A673 (cell line): ENCODE measurements at regions of chr7 and their contacts with region 1.

Region 1: DNA sequence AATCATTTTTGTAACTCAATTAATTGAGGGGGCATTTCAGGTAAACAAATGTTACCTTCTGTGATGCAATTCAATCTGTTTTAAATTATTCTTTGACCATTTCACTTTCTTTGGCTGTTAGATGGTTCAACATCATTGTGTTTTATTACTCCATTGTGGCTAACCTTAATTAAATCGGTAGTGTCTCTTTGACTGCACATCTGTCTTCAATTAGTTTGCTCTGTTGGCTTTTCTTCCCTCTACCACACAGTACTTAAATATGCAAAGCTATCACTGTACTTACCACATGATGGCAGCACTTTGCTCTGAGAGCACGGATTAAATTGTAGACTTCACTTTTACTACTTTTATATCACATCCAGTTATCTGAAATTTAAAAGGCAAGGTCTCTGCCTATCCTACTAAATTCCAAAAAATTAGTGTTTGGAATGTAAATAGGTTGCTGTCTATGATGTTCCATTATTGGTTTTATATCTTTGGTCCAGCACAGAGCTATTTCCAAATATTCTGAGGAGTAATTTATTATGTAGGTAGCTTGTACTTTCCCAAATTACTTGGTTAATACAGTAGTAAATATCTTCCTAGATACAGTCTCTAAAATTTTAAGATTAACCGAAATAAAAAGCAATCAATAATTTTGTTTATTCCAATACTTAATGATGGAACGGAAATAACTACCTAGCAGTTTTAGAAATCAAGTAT is 352.0 kb downstream of the PCLO start:
- DNase-seq: peak; percentile 92
- H3K4me3 ChIP-seq: no peak overlapping the region
- H3K27ac ChIP-seq: no peak overlapping the region
- H3K4me1 ChIP-seq: peaks cover 24% of the 10 kb centered on the region
- H3K27me3 ChIP-seq: no peaks in the 10 kb centered on the region
- CTCF ChIP-seq: peak; percentile 88

Region 2: DNA sequence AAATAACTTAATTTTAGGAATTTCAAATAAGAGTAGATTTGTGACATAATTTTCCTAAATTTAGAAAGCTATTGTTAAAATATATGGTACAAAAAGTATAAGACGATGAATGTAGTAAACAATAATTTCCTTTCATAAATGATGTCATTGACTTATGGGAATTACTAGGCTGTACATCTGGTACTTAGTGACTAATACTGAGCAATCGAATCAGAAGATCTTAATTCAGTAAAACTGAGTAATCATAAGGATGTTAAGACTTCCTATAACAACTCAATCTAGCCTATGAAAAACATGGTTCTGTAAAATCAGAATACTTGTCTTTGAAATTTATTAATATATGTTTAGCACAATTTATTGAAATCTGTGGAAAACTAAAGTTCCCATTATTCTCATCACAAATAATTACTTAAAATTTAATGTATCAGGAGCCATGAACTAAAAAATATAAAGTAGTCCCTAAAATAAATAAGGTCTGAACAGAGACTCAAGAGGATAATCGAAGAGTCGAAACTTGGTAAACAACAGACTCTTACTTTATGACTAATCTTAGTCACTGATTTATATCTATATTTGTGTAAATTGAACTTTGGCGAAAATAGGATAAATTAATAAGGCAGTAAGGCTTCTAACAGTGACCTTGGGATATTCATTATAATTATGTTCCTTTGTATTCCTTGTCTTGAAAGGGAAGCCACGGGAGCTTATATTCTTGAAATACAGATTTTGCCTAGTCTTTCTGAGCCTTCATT is 1183.0 kb before region 1 on chr7:
- CTCF ChIA-PET with region 1: no interaction called
- POLR2A ChIA-PET with region 1: no interaction called
- intact Hi-C with region 1: no loop called
- DNase-seq: peak; percentile 9
- H3K4me3 ChIP-seq: no peak overlapping the region
- H3K27ac ChIP-seq: no peak overlapping the region
- H3K4me1 ChIP-seq: peaks cover 8% of the 10 kb centered on the region
- H3K27me3 ChIP-seq: no peaks in the 10 kb centered on the region
- CTCF ChIP-seq: no peak

Region 3: GRCh38 chr7:82740246-82740848 is 70.4 kb before region 1 on chr7:
- CTCF ChIA-PET with region 1: no interaction called
- POLR2A ChIA-PET with region 1: no interaction called
- intact Hi-C with region 1: no loop called
- DNase-seq: peak; percentile 81
- H3K4me3 ChIP-seq: no peak overlapping the region
- H3K27ac ChIP-seq: no peak overlapping the region
- H3K4me1 ChIP-seq: no peaks in the 10 kb centered on the region
- H3K27me3 ChIP-seq: no peaks in the 10 kb centered on the region
- CTCF ChIP-seq: peak; percentile 85

Region 4: DNA sequence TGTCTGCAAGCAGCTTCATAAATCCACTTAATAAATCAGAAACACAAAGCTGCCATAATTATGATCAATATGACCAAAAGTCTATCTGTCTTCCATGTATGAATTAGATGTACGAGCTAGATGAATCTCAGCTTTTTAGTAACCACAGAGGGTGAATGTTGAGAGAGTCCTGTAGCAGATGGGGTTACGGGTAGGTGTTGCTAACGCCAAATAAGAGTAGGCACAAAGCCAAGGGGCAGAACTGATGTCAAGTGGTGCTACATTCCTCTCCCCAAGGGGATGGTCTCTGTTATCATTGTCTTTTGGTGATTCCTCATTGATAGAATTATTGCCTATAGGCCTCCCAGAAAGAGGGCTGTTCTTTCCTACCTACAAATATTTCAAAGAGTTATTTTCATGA is 94.2 kb after region 1 on chr7:
- CTCF ChIA-PET with region 1: no interaction called
- POLR2A ChIA-PET with region 1: no interaction called
- intact Hi-C with region 1: no loop called
- DNase-seq: no peak
- H3K4me3 ChIP-seq: no peak overlapping the region
- H3K27ac ChIP-seq: no peak overlapping the region
- H3K4me1 ChIP-seq: no peaks in the 10 kb centered on the region
- H3K27me3 ChIP-seq: no peaks in the 10 kb centered on the region
- CTCF ChIP-seq: no peak

Region 5: GRCh38 chr7:83162402-83163256 is 351.9 kb after region 1 on chr7 and contains the start of gene PCLO:
- CTCF ChIA-PET with region 1: no interaction called
- POLR2A ChIA-PET with region 1: no interaction called
- intact Hi-C with region 1: loop called (anchors 10 kb)
- DNase-seq: peak; percentile 75
- H3K4me3 ChIP-seq: peak within 1 kb of the TSS; percentile 57
- H3K27ac ChIP-seq: no peak within 1 kb of the TSS
- H3K4me1 ChIP-seq: peaks cover 7% of the 10 kb centered on the region
- H3K27me3 ChIP-seq: peaks cover 49% of the 10 kb centered on the region
- CTCF ChIP-seq: no peak
- total RNA-seq, gene PCLO: 1.2 and 2.1 TPM in 2 replicates

Region 6: DNA sequence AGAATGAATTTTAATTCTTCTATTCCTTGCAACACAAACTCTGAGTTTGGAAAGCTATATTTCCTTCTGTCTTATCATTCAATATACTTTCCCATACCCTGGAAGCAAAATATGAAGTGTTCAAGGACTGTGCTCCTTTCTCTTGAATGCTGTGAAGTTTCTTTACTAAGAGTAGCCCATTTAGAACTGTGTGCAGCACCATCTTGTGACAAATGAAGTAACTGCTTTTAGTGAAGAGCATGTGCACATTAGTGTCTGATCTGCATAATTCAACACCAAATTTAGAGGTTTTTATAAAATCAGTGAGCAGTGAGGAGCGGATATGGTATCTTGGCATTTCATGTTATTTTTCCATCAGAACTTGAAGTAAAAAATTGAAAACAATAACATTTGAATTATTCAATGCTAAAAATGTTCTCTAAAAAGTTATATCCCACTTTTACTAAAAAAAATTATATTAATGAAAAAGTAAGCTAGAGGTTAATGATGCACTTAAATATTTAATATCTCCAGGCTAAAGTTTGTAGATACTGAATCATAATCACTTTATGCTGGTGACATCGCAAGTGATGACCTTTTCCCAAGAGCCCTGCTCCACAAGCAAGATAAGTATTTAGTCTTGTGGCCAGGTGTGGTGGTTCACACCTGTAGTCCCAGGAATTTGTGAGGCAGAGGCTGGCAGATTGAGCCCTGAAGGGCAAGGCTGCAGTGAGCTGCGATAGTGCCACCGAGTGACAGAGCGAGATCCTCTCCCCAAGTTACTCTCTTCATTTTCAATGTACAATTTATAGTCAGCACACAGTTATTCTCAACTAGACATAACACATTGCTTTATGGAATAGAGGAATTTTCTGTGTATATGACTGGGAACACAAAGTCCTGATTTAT is 460.7 kb after region 1 on chr7:
- CTCF ChIA-PET with region 1: no interaction called
- POLR2A ChIA-PET with region 1: no interaction called
- intact Hi-C with region 1: loop called (anchors 1 kb)
- DNase-seq: peak; percentile 64
- H3K4me3 ChIP-seq: no peak overlapping the region
- H3K27ac ChIP-seq: no peak overlapping the region
- H3K4me1 ChIP-seq: no peaks in the 10 kb centered on the region
- H3K27me3 ChIP-seq: no peaks in the 10 kb centered on the region
- CTCF ChIP-seq: peak; percentile 58